Heart left ventricle (tissue), 16 donors: ENCODE measurements at regions of chr22 and their contacts with region 1.

Region 1: DNA sequence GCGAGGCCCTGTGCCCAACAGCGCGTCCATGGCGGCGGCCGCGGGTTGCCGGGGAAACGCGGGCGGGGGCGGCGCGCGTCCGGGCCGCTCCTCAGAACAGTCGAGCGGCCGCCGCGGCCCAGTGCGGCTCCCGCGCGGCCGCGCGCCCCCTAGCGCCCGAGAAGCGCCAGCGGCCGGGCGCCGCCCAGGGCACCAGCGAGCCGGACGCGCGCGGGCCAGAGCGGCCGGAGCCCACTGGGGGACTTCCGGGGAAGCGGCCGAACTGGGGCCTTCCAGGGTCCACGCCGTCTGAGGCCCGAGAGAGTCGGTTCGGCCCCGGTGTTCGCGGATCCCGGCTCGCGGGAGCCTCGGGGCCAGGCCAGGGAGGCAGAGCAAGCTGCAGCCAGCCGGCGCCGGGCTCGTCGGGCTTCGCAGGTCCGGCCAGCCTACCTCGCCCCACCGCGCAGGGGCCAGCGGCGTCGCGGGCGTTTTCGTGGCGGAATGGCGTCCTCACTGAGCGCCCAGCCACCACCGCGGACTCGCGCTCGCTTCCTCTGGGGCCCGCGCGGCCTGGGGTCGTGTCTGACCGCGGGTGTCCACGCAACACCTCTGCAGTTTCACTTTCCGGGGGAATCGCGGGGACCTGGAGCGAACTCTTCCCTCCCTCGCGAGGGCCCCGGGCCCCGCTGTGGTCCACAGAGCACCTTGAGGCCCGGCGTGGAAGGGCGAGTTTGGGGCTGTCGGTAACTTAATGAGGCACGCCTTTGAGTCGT is at the start of gene DENND6B:
- DNase-seq: peak; percentile 77 to 92 (median 88)
- ATAC-seq: peak; percentile 86 to 98 (median 94)
- H3K4me3 ChIP-seq: peak within 1 kb of the TSS; percentile 45 to 95 (median 80)
- H3K27ac ChIP-seq: peak within 1 kb of the TSS; percentile 87 to 98 (median 95)
- H3K4me1 ChIP-seq: peaks cover 0 to 18% (median 11%) of the 10 kb centered on the region in 12 donors
- H3K27me3 ChIP-seq: no peaks in the 10 kb centered on the region
- CTCF ChIP-seq: peak; percentile 23 to 83 (median 57)
- POLR2A ChIP-seq: peak in 1 of 2 donors; percentile 56
- total RNA-seq, gene DENND6B: 1.0 to 3.2 (median 2.0) TPM

Region 2: DNA sequence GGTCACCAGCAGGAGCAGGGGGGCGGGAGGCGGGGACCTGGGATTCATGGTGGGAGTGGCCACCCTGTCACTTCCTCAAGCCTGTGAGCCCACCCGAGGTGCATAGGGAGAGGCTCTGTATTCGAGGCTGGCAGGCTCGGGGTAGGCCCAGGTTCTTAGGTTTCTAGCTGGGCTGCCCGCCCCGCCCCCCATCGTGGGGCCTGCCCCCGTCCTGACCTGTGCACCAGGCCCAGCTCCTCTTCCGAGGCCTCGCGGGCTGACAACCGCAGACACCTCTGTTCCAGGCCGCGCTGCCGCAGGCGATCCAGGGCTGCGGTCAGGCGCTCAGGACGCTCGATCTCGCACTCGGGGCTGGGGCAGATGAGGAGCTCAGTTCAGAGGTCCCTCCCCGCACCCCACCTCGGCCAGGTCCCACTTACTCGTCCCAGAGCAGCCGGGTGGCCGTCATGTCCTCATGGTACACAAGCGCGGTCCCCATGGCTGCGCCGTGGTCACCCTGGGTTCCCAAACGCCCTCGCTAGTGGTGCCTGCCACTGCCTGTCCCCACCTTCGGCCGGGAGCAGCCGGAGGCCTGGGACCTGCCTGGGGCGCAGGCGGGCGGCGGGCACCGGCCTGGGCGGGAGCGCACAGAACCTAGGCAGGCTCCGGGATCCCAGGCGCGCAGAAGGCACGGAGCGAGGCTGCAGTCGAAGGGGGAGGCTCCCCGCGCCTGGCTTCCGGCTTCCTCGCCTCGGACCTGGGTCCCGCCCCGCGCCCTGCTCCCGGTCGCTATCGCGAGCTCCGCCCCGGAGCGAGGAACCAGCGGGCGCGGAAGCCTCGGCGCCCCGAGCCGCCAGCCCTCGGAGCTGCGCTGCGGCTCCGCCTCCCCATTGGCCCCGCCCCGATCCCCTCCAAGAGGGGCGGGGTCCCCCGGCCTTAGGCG is 76.3 kb before region 1 on chr22 and contains the start of gene HDAC10:
- intact Hi-C with region 1: loop called in 1 of 10 experiments (anchors 2 kb)
- DNase-seq: peak; percentile 75 to 94 (median 85)
- ATAC-seq: peak; percentile 25 to 80 (median 72)
- H3K4me3 ChIP-seq: peak within 1 kb of the TSS; percentile 53 to 83 (median 69)
- H3K27ac ChIP-seq: peak within 1 kb of the TSS in 11 of 12 donors; percentile 53 to 81 (median 65)
- H3K4me1 ChIP-seq: peaks cover 5 to 43% (median 27%) of the 10 kb centered on the region in 12 donors
- H3K27me3 ChIP-seq: no peaks in the 10 kb centered on the region
- CTCF ChIP-seq: no peak
- POLR2A ChIP-seq: peak in 1 of 2 donors; percentile 60
- total RNA-seq, gene HDAC10: 6.8 to 22.4 (median 10.9) TPM

Region 3: DNA sequence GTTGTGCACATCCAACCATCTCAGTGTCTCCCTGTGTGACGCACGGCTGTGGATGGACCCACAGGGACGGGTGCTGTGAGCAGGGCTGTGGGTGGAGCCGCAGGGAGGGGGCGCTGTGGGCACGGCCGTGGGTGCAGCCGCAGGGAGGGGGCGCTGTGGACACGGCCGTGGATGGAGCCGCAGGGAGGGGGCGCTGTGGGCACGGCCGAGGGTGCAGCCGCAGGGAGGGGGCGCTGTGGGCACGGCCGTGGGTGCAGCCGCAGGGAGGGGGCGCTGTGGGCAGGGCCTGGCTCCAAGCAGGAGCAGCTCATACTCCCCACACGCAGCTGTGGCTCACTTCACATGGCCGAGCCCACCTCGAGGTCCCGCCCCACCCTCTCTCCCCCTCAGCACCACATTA is 51.0 kb before region 1 on chr22:
- intact Hi-C with region 1: loop called (anchors 1 to 5 kb)
- DNase-seq: peak in 4 of 5 donors; percentile 68 to 86 (median 73)
- ATAC-seq: peak; percentile 53 to 87 (median 81)
- H3K4me3 ChIP-seq: no peak overlapping the region
- H3K27ac ChIP-seq: peak overlapping the region in 1 of 12 donors; percentile 17
- H3K4me1 ChIP-seq: peaks cover 0 to 27% (median 15%) of the 10 kb centered on the region in 12 donors
- H3K27me3 ChIP-seq: peaks cover 0 to 9% (median 0%) of the 10 kb centered on the region in 9 donors
- CTCF ChIP-seq: peak; percentile 42 to 77 (median 58)
- POLR2A ChIP-seq: no peak

Region 4: GRCh38 chr22:50293441-50294318 is 33.5 kb before region 1 on chr22:
- intact Hi-C with region 1: loop called in 4 of 10 experiments (anchors 5 kb)
- DNase-seq: peak in 4 of 5 donors; percentile 73 to 89 (median 84)
- ATAC-seq: peak; percentile 73 to 90 (median 80)
- H3K4me3 ChIP-seq: peak overlapping the region in 11 of 12 donors; percentile 3 to 46 (median 31)
- H3K27ac ChIP-seq: peak overlapping the region; percentile 41 to 97 (median 86)
- H3K4me1 ChIP-seq: peaks cover 3 to 76% (median 50%) of the 10 kb centered on the region in 12 donors
- H3K27me3 ChIP-seq: no peaks in the 10 kb centered on the region
- CTCF ChIP-seq: no peak
- POLR2A ChIP-seq: no peak

Region 5: DNA sequence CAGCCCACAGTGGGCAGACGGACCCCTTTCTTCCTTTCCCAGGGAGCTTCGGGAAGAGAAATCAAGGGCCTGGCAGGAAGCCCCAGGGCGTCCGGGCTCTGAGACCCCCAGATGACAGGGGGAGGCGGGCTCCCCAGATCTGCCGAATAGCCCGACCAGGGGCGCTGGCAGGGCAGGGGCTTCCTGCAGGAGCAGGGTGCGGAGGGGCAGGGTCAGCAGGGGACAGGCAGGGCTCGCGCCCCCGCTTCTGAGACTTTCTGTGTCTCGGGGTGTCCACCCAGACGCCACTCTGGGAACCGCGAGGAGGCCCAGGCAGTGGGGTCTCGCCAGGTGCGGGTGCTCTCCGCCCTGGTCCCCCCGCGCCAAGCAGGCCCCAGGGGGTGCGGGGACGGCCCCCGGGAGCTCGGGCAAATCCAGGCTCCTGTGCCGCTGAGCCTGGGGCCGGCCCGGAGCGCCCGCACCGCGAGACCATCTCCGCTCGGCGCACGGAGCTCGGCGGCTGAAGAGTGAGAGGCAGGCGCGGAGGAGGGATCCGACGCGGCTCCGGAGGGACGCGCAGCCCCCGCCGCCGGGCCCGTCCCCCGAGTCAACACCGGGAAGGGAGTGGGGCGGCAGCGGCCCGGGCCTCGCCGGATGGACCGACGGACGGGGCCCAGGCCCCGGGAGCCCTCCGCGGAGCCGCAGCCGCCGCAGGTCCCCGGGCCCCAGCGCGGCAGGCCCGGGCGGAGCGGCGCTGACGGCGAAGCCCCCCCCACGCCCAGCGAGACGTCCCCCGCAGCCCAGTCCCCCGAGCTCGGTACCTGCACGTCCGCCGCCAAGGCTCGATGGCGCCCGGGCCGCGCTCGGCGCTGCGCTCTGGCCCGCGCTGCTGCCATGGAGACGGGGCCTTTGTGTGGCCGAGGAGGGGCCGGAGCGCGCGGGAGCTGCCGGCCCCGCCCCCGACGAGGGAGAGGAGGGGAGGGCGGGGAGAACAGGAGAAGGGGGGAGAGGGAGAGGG is 20.1 kb before region 1 on chr22 and contains the start of gene PLXNB2:
- intact Hi-C with region 1: loop called in 1 of 10 experiments (anchors 1 kb)
- DNase-seq: peak; percentile 87 to 92 (median 90)
- ATAC-seq: peak; percentile 35 to 73 (median 65)
- H3K4me3 ChIP-seq: peak within 1 kb of the TSS; percentile 55 to 99 (median 90)
- H3K27ac ChIP-seq: peak within 1 kb of the TSS; percentile 84 to 98 (median 93)
- H3K4me1 ChIP-seq: peaks cover 22 to 74% (median 60%) of the 10 kb centered on the region in 12 donors
- H3K27me3 ChIP-seq: no peaks in the 10 kb centered on the region
- CTCF ChIP-seq: no peak
- POLR2A ChIP-seq: peak in 1 of 2 donors; percentile 40
- total RNA-seq, gene PLXNB2: 44.4 to 139 (median 57.9) TPM

Region 6: DNA sequence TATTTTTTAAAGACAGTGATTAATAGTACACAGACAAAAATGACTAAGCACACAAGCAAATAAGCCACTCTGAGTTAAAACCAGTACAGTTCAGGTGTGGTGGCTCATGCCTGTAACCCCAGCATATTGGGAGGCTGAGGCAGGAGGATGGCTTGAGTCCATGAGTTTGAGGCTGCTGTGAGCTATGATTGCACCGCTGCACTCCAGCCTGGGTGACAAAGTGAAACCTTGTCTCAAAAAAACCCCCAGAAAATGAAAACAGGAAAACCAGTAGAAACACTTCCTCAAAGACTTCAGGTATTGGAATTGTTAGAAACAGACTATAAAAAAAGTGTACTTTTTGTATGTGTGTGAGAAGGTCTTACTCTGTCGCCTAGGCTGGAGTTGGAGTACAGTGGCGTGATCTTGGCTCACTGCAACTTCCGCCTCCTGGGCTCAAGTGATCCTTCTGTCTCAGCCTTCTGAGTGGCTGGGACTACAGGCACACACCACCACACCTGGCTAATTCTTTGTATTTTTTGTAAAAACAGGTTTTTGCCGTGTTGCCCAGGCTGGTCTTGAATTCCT is 49.0 kb after region 1 on chr22:
- intact Hi-C with region 1: no loop called
- DNase-seq: peak in 1 of 5 donors; percentile 10
- ATAC-seq: no peak
- H3K4me3 ChIP-seq: no peak overlapping the region
- H3K27ac ChIP-seq: no peak overlapping the region
- H3K4me1 ChIP-seq: peaks cover 0 to 5% (median 0%) of the 10 kb centered on the region in 12 donors
- H3K27me3 ChIP-seq: no peaks in the 10 kb centered on the region
- CTCF ChIP-seq: no peak
- POLR2A ChIP-seq: no peak